Activated naive CD4-positive, alpha-beta T cell treated with anti-CD3 and anti-CD28 coated beads for 36 hours (primary cell): ENCODE measurements at regions of chr6 and their contacts with region 1.

Region 1: GRCh38 chr6:14381829-14382677 is 264.5 kb downstream of the CD83 start:
- DNase-seq: peak; percentile 54
- H3K4me3 Mint-ChIP-seq: no peak overlapping the region
- H3K27ac Mint-ChIP-seq: peak overlapping the region; percentile 41
- H3K4me1 Mint-ChIP-seq: peaks cover 36% of the 10 kb centered on the region
- H3K27me3 Mint-ChIP-seq: peaks cover 2% of the 10 kb centered on the region

Region 2: DNA sequence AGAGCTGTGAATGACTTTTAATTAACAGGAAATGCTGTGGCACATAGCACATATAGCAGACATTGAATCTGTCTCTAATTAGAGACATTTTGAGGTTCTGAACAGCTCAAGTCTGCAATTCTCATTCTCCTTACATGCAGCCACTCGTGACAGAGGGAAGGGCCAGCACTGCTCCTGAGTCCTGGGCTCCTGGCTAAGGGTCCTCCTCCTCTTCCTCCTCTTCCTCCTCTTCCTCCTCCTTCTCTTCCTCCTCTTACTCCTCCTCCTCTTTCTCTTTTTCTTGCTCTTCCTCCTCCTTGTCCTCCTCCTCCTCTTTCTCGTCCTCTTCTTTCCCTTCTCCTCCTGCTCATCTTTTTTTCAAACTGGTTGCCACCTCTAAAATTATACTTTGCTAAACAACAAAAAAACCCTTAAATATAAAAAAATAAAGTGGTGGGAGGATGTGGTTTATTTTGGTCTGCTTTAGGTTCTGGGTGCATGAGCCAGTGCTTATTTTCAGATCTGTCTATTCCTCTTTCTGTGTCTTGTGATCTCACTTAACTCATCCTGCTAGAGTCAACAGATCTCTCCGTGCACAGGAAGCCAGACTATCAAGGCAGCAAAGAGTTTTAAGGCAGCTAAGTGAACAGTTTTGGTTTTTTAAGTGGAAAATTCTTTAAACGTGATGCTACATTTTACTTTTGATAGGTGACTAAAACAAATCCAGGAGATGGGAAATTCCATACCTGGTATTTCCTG is 105.2 kb before region 1 on chr6:
- CTCF ChIA-PET with region 1: no interaction called
- intact Hi-C with region 1: loop called (anchors 5 kb)
- DNase-seq: peak; percentile 63
- H3K4me3 Mint-ChIP-seq: peak overlapping the region; percentile 40
- H3K27ac Mint-ChIP-seq: peak overlapping the region; percentile 85
- H3K4me1 Mint-ChIP-seq: peaks cover 37% of the 10 kb centered on the region
- H3K27me3 Mint-ChIP-seq: no peaks in the 10 kb centered on the region

Region 3: GRCh38 chr6:14316635-14317386 is 65.2 kb before region 1 on chr6:
- CTCF ChIA-PET with region 1: no interaction called
- intact Hi-C with region 1: no loop called
- DNase-seq: peak; percentile 51
- H3K4me3 Mint-ChIP-seq: no peak overlapping the region
- H3K27ac Mint-ChIP-seq: no peak overlapping the region
- H3K4me1 Mint-ChIP-seq: peaks cover 4% of the 10 kb centered on the region
- H3K27me3 Mint-ChIP-seq: no peaks in the 10 kb centered on the region

Region 4: GRCh38 chr6:14431385-14432330 is 49.6 kb after region 1 on chr6:
- CTCF ChIA-PET with region 1: no interaction called
- intact Hi-C with region 1: no loop called
- DNase-seq: no peak
- H3K4me3 Mint-ChIP-seq: no peak overlapping the region
- H3K27ac Mint-ChIP-seq: no peak overlapping the region
- H3K4me1 Mint-ChIP-seq: no peaks in the 10 kb centered on the region
- H3K27me3 Mint-ChIP-seq: no peaks in the 10 kb centered on the region

Region 5: GRCh38 chr6:14665827-14666724 is 284.0 kb after region 1 on chr6:
- CTCF ChIA-PET with region 1: no interaction called
- intact Hi-C with region 1: loop called (anchors 10 kb)
- DNase-seq: peak; percentile 60
- H3K4me3 Mint-ChIP-seq: no peak overlapping the region
- H3K27ac Mint-ChIP-seq: no peak overlapping the region
- H3K4me1 Mint-ChIP-seq: peaks cover 21% of the 10 kb centered on the region
- H3K27me3 Mint-ChIP-seq: no peaks in the 10 kb centered on the region